MCF 10A (cell line): ENCODE measurements at regions of chr19 and their contacts with region 1.

Region 1: GRCh38 chr19:49113762-49114629 is at the start of gene LIN7B:
- DNase-seq: peak; percentile 62
- H3K4me3 Mint-ChIP-seq: peak within 1 kb of the TSS; percentile 73
- H3K27ac Mint-ChIP-seq: no peak within 1 kb of the TSS
- H3K4me1 Mint-ChIP-seq: peaks cover 34% of the 10 kb centered on the region
- H3K27me3 Mint-ChIP-seq: no peaks in the 10 kb centered on the region
- CTCF ChIP-seq: peak; percentile 30
- total RNA-seq, gene LIN7B: 2.6 and 3.2 TPM in 2 replicates

Region 2: GRCh38 chr19:48950159-48950558 is 163.8 kb before region 1 on chr19:
- CTCF ChIA-PET with region 1: no interaction called
- POLR2A ChIA-PET with region 1: no interaction called
- intact Hi-C with region 1: no loop called
- DNase-seq: no peak
- H3K4me3 Mint-ChIP-seq: no peak overlapping the region
- H3K27ac Mint-ChIP-seq: no peak overlapping the region
- H3K4me1 Mint-ChIP-seq: no peaks in the 10 kb centered on the region
- H3K27me3 Mint-ChIP-seq: no peaks in the 10 kb centered on the region
- CTCF ChIP-seq: no peak

Region 3: DNA sequence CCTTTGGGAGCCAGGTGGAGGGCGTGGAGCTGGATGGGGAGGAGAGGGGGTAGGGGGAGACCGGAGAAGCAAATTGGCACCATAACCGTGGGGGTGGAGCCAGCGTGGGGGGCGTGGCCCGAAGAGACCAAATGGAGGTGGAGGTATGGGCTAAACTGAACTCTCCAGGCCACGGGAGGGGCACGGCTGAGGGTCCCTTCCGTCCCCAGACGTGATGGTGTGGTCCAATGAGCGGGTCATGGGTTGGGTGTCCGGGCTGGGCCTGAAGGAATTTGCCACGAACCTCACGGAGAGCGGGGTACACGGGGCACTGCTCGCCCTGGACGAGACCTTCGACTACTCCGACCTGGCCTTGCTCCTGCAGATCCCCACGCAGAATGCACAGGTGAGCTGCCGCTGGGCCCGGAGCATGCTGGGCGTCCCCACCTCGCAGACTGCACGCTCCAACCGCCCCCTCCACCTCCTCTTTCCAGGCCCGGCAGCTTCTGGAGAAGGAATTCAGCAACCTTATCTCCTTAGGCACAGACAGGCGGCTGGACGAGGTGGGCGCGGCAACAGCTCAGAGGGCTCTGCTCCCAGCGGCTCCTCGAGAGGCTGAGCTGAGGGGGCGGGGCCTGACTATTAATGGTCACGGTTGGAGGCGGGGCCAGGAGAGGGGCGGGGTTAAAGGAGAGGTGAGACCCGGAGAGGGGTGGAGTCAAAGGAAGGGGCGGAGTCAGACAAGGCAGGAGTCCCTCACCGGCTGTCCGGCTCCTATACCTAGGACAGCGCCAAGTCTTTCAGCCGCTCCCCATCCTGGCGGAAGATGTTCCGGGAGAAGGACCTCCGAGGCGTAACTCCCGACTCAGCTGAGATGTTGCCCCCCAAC is 35.0 kb after region 1 on chr19:
- CTCF ChIA-PET with region 1: interaction called, 10 read pairs
- POLR2A ChIA-PET with region 1: interaction called, 5 read pairs
- intact Hi-C with region 1: loop called (anchors 5 kb)
- DNase-seq: peak; percentile 98
- H3K4me3 Mint-ChIP-seq: peak overlapping the region; percentile 82
- H3K27ac Mint-ChIP-seq: peak overlapping the region; percentile 52
- H3K4me1 Mint-ChIP-seq: peaks cover 17% of the 10 kb centered on the region
- H3K27me3 Mint-ChIP-seq: no peaks in the 10 kb centered on the region
- CTCF ChIP-seq: no peak